WTC11 (cell line): ENCODE measurements at regions of chr22 and their contacts with region 1.

Region 1: DNA sequence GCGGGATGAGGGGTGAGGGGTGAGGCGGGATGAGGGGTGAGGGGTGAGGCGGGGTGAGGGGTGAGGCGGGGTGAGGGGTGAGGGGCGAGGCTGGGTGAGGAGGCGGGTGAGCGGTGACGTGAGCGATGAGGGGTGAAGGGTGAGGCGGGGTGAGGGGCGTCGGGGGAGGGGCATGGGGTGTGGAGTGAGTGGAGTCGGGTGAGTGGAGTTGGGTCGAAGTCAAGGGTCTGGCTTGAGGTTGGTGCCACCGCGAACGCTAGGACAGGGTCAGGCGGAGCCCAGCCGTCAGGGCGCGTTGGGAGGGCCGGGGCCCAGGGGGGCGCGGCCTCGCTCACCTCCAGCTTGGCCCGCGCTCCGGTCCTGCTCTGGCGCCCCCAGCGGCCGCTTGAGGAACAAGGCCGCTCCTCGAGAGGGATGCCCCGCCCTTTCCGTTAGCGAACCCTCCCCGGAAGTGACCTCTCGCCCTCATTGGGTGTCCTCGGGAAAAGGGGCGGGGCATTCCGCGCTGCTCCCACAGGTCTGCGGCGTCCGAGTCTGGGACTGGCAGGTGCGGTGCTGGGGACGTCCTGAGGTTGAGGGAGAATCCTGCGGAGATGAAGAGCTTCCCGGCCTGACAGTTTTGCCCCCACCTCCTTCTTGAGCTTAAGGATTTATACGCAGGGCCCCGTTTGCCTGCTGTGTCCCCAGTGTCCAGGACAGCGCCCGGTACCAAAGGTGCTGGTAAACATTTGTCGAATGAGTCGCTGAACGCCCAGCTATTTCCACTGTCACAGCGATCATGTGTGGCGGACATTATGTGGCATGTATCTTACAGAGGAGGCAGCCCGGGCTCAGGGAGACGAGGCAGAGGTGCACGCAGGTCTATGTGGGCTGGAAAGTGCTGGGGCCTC is at the start of gene SYCE3:
- DNase-seq: peak; percentile 98
- ATAC-seq: peak; percentile 96
- H3K4me3 Mint-ChIP-seq: peak within 1 kb of the TSS; percentile 83
- H3K27ac Mint-ChIP-seq: no peak within 1 kb of the TSS
- H3K4me1 Mint-ChIP-seq: peaks cover 10% of the 10 kb centered on the region
- H3K27me3 Mint-ChIP-seq: peaks cover 39% of the 10 kb centered on the region
- CTCF ChIP-seq: peak; percentile 93
- total RNA-seq, gene SYCE3: 0.46 to 0.89 TPM (median 0.85 TPM) in 3 replicates

Region 2: DNA sequence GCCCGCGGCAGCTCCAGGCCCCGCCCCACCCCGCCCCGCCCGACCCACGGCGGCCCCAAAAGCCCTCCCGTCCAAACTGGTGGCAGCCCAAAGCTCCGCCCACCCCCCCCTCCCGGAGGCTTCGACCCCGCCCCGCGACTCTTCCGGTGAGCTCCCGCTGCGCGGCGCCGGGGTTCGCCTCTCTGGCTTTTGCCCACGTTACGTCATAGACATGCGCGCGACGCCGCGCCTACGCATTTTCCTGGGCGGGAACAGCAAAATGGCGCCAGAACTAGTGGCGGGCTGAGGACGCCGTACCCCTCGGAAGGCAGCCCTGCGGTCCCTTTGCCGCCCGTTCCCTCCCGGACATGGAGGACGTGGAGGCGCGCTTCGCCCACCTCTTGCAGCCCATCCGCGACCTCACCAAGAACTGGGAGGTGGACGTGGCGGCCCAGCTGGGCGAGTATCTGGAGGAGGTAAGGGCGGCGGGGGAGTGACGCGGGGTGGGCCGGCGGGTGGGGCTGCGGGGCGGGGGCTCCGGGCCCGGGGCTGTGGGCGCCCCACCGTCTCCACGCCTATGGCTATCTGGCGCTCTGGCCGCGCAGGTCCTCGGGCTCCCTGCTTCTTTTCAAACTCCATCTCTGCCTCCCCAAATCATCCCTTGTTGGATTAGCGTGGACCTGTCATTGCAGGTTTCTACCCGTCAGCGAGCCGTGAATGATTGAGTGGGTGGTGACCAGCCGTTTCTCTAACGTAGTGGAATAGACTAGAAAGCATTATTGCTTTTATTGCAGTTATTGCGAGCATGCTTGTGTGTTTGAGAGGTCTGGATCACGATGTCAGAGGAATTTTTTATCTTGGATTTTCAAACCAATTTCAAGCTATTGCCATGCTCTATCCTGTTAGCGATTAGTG is 54.5 kb before region 1 on chr22 and contains the start of gene NCAPH2:
- CTCF ChIA-PET with region 1: interaction called, 16 read pairs
- POLR2A ChIA-PET with region 1: interaction called, 3 read pairs
- DNase-seq: peak; percentile 97
- ATAC-seq: peak; percentile 75
- H3K4me3 Mint-ChIP-seq: peak within 1 kb of the TSS; percentile 93
- H3K27ac Mint-ChIP-seq: peak within 1 kb of the TSS; percentile 98
- H3K4me1 Mint-ChIP-seq: peaks cover 10% of the 10 kb centered on the region
- H3K27me3 Mint-ChIP-seq: no peaks in the 10 kb centered on the region
- CTCF ChIP-seq: no peak
- total RNA-seq, gene NCAPH2: 69.8 to 78.4 TPM (median 70.3 TPM) in 3 replicates

Region 3: DNA sequence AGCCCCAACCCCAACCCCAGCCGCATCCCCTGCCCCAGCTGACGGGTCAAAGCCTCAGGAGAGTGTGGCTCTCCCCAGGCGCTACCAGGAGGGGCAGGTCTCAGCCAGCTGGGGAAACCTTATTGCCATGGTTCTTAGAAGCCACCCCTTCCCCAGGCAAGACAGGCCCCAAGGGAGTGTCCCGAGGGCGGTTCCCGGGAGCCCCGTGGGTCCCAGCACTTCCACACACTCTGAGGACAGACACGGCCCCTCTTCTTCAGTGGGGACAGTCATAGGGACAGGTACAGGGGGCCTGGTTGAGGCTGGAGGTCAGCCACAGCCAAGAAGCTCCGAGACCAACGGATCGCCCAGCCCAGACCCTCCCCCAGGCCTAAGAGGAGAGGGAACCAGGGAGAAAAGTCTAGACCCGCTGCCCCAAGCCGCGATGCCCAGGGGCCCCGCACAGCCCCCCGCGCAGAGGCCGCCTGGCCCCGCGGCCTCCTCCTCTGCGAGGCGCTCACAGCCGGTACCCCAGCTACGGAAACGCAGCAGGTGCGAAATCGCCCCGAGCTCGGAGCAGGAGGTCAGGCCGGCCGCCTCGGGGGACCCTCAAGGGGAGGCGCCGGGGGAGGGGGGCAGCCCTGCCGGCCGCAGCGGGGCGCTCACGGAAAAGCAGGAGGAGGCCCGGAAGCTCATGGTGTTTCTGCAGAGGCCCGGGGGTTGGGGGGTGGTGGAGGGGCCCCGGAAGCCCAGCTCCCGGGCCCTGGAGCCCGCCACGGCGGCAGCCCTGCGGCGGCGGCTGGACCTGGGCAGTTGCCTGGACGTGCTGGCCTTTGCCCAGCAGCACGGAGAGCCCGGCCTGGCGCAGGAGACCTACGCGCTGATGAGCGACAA is 14.5 kb before region 1 on chr22:
- CTCF ChIA-PET with region 1: interaction called, 23 read pairs
- POLR2A ChIA-PET with region 1: no interaction called
- DNase-seq: no peak
- ATAC-seq: no peak
- H3K4me3 Mint-ChIP-seq: no peak overlapping the region
- H3K27ac Mint-ChIP-seq: no peak overlapping the region
- H3K4me1 Mint-ChIP-seq: no peaks in the 10 kb centered on the region
- H3K27me3 Mint-ChIP-seq: peaks cover 11% of the 10 kb centered on the region
- CTCF ChIP-seq: no peak

Region 4: DNA sequence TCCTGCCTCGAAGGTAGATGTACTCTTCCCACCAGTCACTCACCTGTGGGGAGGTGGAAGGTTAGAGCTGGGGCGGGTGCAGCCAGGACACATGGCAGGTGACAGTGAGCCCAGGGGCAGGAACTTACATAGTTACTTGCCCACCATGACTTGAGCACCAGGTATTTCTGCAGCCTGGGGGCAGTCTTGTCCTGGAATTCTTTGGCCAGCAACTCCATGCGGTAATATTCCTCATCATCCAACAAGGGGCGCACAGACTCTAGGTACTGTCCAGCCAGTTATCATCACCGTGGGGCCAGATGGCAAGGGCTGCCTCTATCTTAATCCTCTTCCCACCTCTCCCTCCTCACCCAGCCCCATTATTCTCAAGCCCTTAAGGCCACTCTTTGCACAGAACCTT is 13.3 kb after region 1 on chr22:
- CTCF ChIA-PET with region 1: interaction called, 25 read pairs
- POLR2A ChIA-PET with region 1: no interaction called
- DNase-seq: peak; percentile 41
- ATAC-seq: peak; percentile 54
- H3K4me3 Mint-ChIP-seq: no peak overlapping the region
- H3K27ac Mint-ChIP-seq: no peak overlapping the region
- H3K4me1 Mint-ChIP-seq: no peaks in the 10 kb centered on the region
- H3K27me3 Mint-ChIP-seq: no peaks in the 10 kb centered on the region
- CTCF ChIP-seq: 0 out of 2 replicates have a peak, but pooled peaks have one; percentile 16

Region 5: DNA sequence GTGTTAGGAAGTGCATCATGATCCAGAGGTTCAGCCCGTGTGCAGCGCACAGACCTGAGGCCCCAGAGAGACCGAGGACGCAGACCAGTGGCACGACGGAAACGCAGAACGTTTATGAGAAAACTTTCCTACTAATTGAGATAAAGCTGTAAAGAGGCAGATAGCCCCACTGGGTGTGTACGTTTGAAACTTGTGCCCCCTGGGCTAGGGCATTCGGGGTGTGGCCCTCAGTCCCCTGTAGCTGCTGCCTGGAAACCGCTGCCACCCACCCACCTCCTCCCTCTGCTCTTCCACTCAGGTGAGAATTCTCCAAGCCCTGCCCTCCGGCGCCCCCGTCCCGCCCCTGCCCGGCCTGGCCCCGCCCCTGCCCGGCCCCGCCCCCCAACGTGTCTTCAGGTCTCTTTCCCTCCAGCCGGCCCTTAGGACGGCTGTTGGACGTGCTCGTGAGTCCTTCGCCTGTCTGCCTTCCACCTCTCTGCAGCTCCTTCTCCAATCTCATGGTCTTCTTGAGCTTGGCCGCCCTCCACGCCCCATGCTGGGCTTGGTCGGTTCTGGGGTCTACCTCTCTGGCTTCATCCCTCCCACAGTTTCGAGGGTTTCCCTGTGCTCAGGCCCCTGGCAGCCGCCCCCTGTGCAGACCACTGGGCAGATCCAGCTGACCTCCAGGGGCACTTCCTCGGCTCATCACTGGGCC is 49.9 kb after region 1 on chr22:
- CTCF ChIA-PET with region 1: interaction called, 12 read pairs
- POLR2A ChIA-PET with region 1: no interaction called
- DNase-seq: peak; percentile 51
- ATAC-seq: peak; percentile 89
- H3K4me3 Mint-ChIP-seq: no peak overlapping the region
- H3K27ac Mint-ChIP-seq: no peak overlapping the region
- H3K4me1 Mint-ChIP-seq: peaks cover 14% of the 10 kb centered on the region
- H3K27me3 Mint-ChIP-seq: peaks cover 16% of the 10 kb centered on the region
- CTCF ChIP-seq: no peak

Region 6: GRCh38 chr22:50620593-50621355 is 58.0 kb after region 1 on chr22:
- CTCF ChIA-PET with region 1: interaction called, 23 read pairs
- POLR2A ChIA-PET with region 1: no interaction called
- DNase-seq: peak; percentile 92
- ATAC-seq: peak; percentile 93
- H3K4me3 Mint-ChIP-seq: peak overlapping the region; percentile 57
- H3K27ac Mint-ChIP-seq: no peak overlapping the region
- H3K4me1 Mint-ChIP-seq: peaks cover 24% of the 10 kb centered on the region
- H3K27me3 Mint-ChIP-seq: peaks cover 16% of the 10 kb centered on the region; the same call in 1 of the 2 replicates
- CTCF ChIP-seq: no peak; the same call in 1 of the 2 replicates